ENCODE measurements at regions of chr1 and their contacts with region 1.

Region 1: GRCh38 chr1:163162381-163162914 is 40.3 kb downstream of the RGS5 start:
- DNase-seq: no peak
- ATAC-seq: no peak
- H3K4me3 ChIP-seq: no peak overlapping the region
- H3K27ac ChIP-seq: no peak overlapping the region
- H3K4me1 ChIP-seq: peaks cover 57% of the 10 kb centered on the region
- H3K27me3 ChIP-seq: no peaks in the 10 kb centered on the region
- CTCF ChIP-seq: no peak

Region 2: GRCh38 chr1:161359291-161359690 is 1803.2 kb before region 1 on chr1:
- CTCF ChIA-PET with region 1: no interaction called
- POLR2A ChIA-PET with region 1: interaction called, 14 read pairs
- intact Hi-C with region 1: no loop called
- DNase-seq: no peak
- ATAC-seq: no peak
- H3K4me3 ChIP-seq: no peak overlapping the region
- H3K27ac ChIP-seq: no peak overlapping the region
- H3K4me1 ChIP-seq: no peaks in the 10 kb centered on the region
- H3K27me3 ChIP-seq: no peaks in the 10 kb centered on the region
- CTCF ChIP-seq: no peak

Measured in PC-3 (cell line).